AG04450 (cell line): ENCODE measurements at regions of chr1 and their contacts with region 1.

Region 1: DNA sequence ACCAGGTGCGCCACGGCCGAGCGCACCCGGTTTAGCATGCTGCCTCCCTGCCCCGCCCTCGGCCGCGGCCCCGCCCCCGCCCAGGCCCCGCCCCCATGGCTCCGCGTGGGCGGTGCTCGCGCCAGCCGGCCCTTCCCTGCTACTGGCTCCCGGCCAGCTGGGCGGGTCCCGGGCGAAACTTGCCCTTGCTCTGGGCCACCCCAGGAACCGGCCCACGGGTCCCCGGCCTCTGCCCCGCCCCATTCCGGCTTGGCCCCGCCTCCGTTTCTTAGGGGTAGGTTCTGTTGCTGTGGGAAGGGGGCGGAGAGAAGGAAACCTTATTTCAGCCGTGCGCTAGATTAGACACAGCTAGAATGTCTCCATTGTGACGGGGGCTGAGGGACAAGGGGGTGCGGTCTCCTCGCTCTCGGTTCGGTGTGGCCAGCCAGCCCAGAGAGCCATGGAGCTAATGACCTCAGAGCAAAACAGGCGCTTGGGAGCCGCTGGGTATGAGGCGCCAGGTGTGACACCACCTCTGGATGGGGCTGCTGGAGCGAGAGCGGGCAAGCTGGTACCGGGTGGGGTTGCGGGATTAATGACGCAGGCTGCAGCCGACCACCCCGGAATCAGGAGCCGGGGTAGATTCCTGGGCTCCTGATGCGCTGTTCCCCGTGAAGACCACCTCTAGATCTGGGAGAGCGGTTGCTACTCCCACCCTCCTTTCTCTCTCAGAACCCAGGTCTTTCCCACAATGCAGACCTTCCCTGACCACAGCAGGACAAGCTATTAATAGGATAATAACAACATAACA is at the start of gene PPM1J:
- DNase-seq: peak; percentile 70
- H3K4me3 ChIP-seq: peak within 1 kb of the TSS; percentile 68
- H3K27ac ChIP-seq: peak within 1 kb of the TSS; percentile 39
- H3K27me3 ChIP-seq: peaks cover 3% of the 10 kb centered on the region
- CTCF ChIP-seq: no peak
- polyA plus RNA-seq, gene PPM1J: 1.3 and 2.1 TPM in 2 replicates

Region 2: DNA sequence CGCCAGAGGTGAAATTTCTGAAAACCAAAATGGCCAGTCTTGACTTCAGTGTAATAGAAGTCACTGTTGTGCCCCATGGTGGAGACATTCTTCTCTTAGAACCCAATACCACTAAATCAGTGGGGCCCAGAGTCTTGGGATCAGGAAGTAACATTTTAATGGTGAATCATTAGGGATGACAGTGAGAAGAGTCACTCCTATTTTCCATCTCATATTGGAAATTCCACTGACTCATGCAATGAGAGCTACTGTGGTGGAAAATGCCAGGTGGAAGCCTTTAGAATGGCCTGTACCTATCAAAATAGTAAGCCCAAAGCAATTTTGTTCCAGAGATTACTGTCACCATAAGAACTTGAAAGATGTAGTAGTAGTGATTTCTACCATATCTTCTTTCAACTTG is 20.3 kb after region 1 on chr1:
- CTCF ChIA-PET with region 1: interaction called, 85 read pairs
- POLR2A ChIA-PET with region 1: no interaction called
- DNase-seq: peak; percentile 53
- H3K4me3 ChIP-seq: no peak overlapping the region
- H3K27ac ChIP-seq: peak overlapping the region; percentile 75
- H3K27me3 ChIP-seq: no peaks in the 10 kb centered on the region
- CTCF ChIP-seq: no peak

Region 3: GRCh38 chr1:112762541-112763517 is 47.4 kb after region 1 on chr1:
- CTCF ChIA-PET with region 1: interaction called, 17 read pairs
- POLR2A ChIA-PET with region 1: interaction called, 3 read pairs
- DNase-seq: no peak
- H3K4me3 ChIP-seq: no peak overlapping the region
- H3K27ac ChIP-seq: no peak overlapping the region
- H3K27me3 ChIP-seq: no peaks in the 10 kb centered on the region
- CTCF ChIP-seq: no peak

Region 4: GRCh38 chr1:112818990-112819689 is 103.7 kb after region 1 on chr1:
- CTCF ChIA-PET with region 1: interaction called, 24 read pairs
- POLR2A ChIA-PET with region 1: no interaction called
- DNase-seq: peak; percentile 39
- H3K4me3 ChIP-seq: no peak overlapping the region
- H3K27ac ChIP-seq: no peak overlapping the region
- H3K27me3 ChIP-seq: no peaks in the 10 kb centered on the region
- CTCF ChIP-seq: no peak

Region 5: DNA sequence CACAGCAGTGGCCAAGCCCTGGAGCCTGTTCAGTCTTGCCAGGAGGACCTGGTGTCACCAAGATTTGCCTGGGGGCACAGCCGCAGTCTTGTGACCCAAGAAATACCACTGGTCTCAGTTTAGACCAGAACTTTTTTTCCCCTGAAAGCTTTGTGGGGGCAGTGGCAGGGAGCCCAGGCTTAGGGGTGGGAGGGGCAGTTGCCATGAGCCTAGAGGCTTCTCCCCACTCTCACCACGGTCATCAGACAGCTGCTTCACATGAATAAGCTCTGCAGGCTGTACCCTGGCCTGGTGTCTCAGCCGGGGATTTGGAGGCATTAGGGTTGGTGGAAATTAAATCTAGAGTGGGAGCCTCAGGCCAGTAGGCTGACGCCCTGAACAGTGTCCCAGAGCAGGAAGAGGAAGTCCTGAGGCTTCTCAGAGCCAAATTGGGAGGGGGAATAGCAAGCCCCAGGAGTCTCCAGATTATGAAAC is 166.8 kb after region 1 on chr1:
- CTCF ChIA-PET with region 1: interaction called, 13 read pairs
- POLR2A ChIA-PET with region 1: no interaction called
- DNase-seq: no peak
- H3K4me3 ChIP-seq: no peak overlapping the region
- H3K27ac ChIP-seq: no peak overlapping the region
- H3K27me3 ChIP-seq: no peaks in the 10 kb centered on the region
- CTCF ChIP-seq: no peak

Region 6: GRCh38 chr1:113072757-113073478 is 357.5 kb after region 1 on chr1 and contains the start of gene LRIG2:
- CTCF ChIA-PET with region 1: interaction called, 90 read pairs
- POLR2A ChIA-PET with region 1: interaction called, 8 read pairs
- DNase-seq: peak; percentile 92
- H3K4me3 ChIP-seq: peak within 1 kb of the TSS; percentile 99
- H3K27ac ChIP-seq: peak within 1 kb of the TSS; percentile 86
- H3K27me3 ChIP-seq: no peaks in the 10 kb centered on the region
- CTCF ChIP-seq: peak; percentile 88
- polyA plus RNA-seq, gene LRIG2: 7.9 and 9.7 TPM in 2 replicates